ENCODE measurements at regions of chr22 and their contacts with region 1.

Region 1: GRCh38 chr22:17612057-17612456 is 16.5 kb downstream of the ATP6V1E1 start:
- DNase-seq: no peak
- H3K4me3 ChIP-seq: no peak overlapping the region
- H3K27ac ChIP-seq: no peak overlapping the region
- H3K4me1 ChIP-seq: no peaks in the 10 kb centered on the region
- H3K27me3 ChIP-seq: no peaks in the 10 kb centered on the region
- CTCF ChIP-seq: no peak

Region 2: DNA sequence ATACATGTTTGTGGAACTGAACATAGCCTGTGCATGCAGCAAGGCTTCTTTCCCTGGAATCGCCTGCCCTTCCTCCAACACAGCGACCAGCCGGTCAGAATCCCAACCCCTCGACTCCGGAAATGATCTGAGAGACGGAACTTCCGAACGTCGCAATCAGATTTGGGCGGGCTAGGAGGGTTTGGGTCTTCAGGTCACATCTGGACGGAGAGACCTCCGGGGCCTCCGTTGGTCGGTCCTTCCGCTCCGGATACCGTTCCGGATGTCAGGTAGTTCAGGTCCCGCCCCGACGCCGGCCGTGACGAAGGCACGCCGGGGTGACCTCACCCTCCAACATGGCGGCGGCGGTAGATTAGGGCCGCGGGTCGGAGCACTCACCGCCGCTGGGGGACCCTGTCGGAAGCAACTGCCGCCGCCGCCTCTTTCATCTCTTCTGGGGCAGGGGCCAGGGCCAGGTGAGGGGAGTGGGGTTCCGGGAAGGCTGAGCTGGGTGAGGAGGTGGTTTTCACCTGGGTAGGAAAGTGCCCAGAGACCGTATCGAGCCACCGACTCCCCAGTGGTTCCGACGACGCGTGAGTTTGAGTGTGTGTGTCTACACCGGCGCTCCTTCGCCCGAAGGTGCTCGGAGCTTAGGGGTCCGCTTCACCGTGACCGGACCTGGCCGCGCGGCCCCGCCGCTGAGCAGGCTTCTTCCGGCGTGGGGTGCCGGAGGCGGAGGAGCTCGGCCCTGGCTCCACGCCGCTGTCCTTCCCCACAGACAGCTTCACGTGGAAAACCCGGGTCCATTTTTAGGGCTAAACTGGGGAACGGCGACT is 26.6 kb after region 1 on chr22 and contains the start of gene BCL2L13:
- CTCF ChIA-PET with region 1: no interaction called
- dilution Hi-C with region 1: no loop called
- in situ Hi-C with region 1: no loop called
- intact Hi-C with region 1: no loop called
- DNase-seq: peak; percentile 88
- H3K4me3 ChIP-seq: peak within 1 kb of the TSS; percentile 63 to 91 (median 81)
- H3K27ac ChIP-seq: peak within 1 kb of the TSS; percentile 97
- H3K4me1 ChIP-seq: peaks cover 18% of the 10 kb centered on the region
- H3K27me3 ChIP-seq: no peaks in the 10 kb centered on the region
- CTCF ChIP-seq: no peak
- total RNA-seq, gene BCL2L13: 62.5 to 67.5 TPM

Region 3: GRCh38 chr22:17678872-17679271 is 66.8 kb after region 1 on chr22:
- CTCF ChIA-PET with region 1: no interaction called
- dilution Hi-C with region 1: loop called (anchors 5 kb)
- in situ Hi-C with region 1: no loop called
- intact Hi-C with region 1: no loop called
- DNase-seq: no peak
- H3K4me3 ChIP-seq: no peak overlapping the region
- H3K27ac ChIP-seq: no peak overlapping the region
- H3K4me1 ChIP-seq: no peaks in the 10 kb centered on the region
- H3K27me3 ChIP-seq: no peaks in the 10 kb centered on the region
- CTCF ChIP-seq: no peak